PC-9 (cell line): ENCODE measurements at regions of chr18 and their contacts with region 1.

Region 1: GRCh38 chr18:46073474-46074331 is 1.6 kb upstream of the PSTPIP2 start:
- DNase-seq: peak; percentile 31 to 65
- H3K4me3 ChIP-seq: no peak overlapping the region
- H3K27ac ChIP-seq: no peak overlapping the region
- H3K4me1 ChIP-seq: 0 out of 2 replicates have a peak, but pooled peaks cover 3% of the 10 kb centered on the region
- H3K27me3 ChIP-seq: no peaks in the 10 kb centered on the region
- CTCF ChIP-seq: peak; percentile 79

Region 2: GRCh38 chr18:45839414-45840395 is 234.0 kb before region 1 on chr18:
- CTCF ChIA-PET with region 1: no interaction called
- POLR2A ChIA-PET with region 1: no interaction called
- intact Hi-C with region 1: no loop called
- DNase-seq: peak; percentile 37 to 61
- H3K4me3 ChIP-seq: no peak overlapping the region
- H3K27ac ChIP-seq: no peak overlapping the region
- H3K4me1 ChIP-seq: peaks cover 30% of the 10 kb centered on the region
- H3K27me3 ChIP-seq: no peaks in the 10 kb centered on the region
- CTCF ChIP-seq: peak; percentile 76

Region 3: DNA sequence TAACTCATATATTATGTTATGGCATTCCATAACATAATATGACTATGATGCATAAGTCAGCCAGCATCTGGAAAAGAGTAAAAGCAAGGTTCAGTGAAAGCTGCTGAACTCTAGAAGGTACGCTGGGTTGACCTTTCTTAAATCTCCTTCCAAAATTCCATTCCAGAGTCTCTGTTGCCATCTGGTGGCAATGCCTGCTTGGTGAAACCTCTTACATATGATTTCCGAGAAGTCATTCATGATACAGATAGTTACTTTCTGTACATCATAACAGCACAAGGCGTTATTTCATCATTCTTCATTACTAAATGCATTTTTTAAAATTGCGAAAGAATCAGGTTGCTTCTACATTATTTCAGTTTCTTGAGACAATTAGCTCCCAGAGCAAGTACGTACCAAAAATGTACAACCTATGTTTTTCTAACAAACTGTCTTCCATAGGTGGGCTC is 99.6 kb before region 1 on chr18:
- CTCF ChIA-PET with region 1: no interaction called
- POLR2A ChIA-PET with region 1: no interaction called
- intact Hi-C with region 1: loop called (anchors 5 kb)
- DNase-seq: peak; percentile 29 to 73
- H3K4me3 ChIP-seq: no peak overlapping the region
- H3K27ac ChIP-seq: no peak overlapping the region
- H3K4me1 ChIP-seq: peaks cover 4% of the 10 kb centered on the region; the same call in 1 of the 2 replicates
- H3K27me3 ChIP-seq: no peaks in the 10 kb centered on the region
- CTCF ChIP-seq: peak; percentile 85

Region 4: DNA sequence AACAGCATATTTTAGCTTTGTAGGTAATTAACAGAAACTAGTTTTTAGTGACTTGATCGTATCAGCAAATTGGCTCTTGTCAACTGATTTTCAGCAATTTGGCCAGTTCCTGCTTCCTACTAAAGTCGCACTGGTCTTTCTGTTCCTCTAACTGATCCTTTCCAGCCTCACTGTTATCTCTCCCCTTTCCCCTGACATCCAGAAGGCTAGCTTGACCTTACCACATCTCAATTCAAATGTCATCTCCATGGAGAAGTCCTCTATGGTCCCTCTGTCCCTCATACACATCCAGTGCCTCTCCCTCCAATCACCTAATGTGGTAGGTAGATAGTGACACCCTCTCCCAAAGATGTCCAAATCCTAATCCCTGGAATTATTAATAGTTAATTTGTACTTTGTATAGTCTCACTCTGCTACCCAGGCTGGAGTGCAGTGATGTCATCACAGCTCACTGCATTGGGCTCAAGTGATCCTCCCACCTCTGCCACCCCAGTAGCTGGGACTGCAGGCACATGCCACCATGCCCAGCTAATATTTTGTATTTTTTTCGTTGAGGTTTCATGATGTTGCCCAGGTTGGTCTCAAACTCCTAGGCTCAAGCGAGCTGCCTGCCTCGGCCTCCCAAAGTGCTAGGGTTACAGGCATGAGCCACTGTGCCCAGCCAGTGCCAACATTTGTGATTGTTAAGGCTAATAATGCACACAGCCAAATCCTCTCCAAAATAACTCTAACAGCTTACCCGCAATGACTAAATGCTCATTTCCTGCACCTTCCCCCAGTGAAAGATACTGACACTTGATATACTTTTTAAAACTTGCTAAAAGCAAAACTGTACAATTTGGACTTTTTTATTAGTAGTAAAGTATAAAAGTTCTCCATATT is 18.5 kb before region 1 on chr18:
- CTCF ChIA-PET with region 1: no interaction called
- POLR2A ChIA-PET with region 1: no interaction called
- intact Hi-C with region 1: no loop called
- DNase-seq: no peak
- H3K4me3 ChIP-seq: no peak overlapping the region
- H3K27ac ChIP-seq: no peak overlapping the region
- H3K4me1 ChIP-seq: no peaks in the 10 kb centered on the region
- H3K27me3 ChIP-seq: no peaks in the 10 kb centered on the region
- CTCF ChIP-seq: no peak

Region 5: GRCh38 chr18:46167971-46168370 is 94.3 kb after region 1 on chr18:
- CTCF ChIA-PET with region 1: no interaction called
- POLR2A ChIA-PET with region 1: no interaction called
- intact Hi-C with region 1: no loop called
- DNase-seq: peak in 1 of 2 experiments; percentile 50
- H3K4me3 ChIP-seq: no peak overlapping the region
- H3K27ac ChIP-seq: no peak overlapping the region
- H3K4me1 ChIP-seq: peaks cover 28% of the 10 kb centered on the region
- H3K27me3 ChIP-seq: no peaks in the 10 kb centered on the region
- CTCF ChIP-seq: no peak